ENCODE measurements at regions of chr7 and their contacts with region 1.

Region 1: DNA sequence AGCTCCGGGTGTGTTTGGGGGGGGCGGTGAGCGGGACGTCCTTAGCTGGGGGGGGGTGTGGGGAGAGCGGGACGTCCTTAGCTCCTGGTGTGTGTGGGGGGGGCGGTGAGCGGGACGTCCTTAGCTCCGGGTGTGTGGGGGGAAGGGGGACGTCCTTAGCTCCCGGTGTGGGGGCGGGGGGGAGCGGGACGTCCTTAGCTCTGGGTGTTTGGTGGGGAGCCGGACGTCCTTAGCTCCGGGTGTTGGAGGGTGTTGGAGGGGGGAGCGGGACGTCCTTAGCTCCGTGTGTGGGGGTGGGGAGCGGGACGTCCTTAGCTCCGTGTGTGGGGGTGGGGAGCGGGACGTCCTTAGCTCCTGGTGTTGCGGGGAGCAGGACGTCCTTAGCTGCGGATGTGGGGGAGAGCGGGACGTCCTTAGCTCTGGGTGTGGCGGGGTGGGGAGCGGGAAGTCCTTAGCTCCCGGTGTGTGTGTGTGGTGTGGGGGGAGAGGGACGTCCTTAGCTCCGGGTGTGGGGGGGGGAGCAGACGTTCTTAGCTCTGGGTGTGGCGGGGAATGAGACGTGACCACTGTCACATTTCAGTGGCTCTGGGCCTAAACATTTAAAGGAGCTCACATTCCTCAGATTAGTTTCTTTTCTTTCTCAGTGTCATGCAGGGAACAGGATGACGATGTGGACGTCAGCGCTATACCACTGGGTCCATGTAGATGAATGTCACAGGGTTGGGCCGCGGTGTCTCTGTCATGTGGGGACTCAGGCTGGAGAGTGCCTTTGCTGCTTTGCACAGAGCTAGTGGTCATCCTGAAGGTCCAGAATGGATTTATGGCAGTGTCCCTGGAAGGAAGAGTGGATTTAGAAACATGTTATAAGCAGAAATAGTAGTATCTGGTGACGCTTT is 7.5 kb downstream of the DYNC2I1 start:
- DNase-seq: peak; percentile 72 to 91
- H3K4me3 ChIP-seq: peak overlapping the region; percentile 64 to 65
- H3K27ac ChIP-seq: peak overlapping the region; percentile 91 to 93
- H3K4me1 ChIP-seq: peaks cover 0 to 32% (median 17%) of the 10 kb centered on the region in 4 donors
- H3K27me3 ChIP-seq: no peaks in the 10 kb centered on the region
- CTCF ChIP-seq: no peak

Region 2: DNA sequence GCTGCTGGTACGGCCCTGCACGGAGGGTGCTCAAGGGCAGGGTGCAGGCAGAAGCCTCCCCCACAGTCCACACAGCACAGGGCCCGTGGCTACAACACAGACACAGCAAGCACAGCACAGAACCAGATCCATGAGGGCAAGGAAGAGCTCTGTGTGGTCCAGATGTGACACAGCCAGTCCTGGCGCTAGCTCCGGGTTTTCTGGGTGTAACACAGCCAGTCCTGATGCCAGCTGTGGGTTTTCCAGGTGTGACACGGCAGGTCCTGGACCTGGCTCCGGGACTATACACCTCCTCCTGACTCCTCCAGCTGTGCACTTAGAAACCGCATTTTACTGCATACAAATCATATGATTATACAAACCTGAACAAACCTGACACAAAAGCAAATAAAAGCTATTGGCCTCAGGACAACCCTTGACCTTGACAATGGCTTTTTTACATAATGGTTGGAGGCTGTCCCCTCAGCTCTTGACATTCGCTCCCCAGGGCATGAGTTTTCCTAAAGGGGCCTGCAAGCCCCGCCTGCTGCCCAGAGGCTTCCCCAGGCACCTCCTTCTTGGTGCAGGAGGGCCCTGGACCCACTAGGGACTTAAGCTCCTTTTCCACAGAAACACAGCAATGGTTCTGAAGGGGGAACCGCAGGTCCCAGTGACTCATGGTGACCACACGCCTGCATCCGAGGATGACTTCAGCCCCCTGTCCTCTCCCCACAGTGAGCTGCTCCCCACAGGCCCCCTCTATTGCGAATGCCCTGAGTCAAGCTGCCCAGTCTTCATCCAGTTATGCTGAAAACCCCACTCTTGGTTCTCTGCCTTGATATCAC is 485.8 kb before region 1 on chr7:
- intact Hi-C with region 1: no loop called
- DNase-seq: no peak
- H3K4me3 ChIP-seq: no peak overlapping the region
- H3K27ac ChIP-seq: no peak overlapping the region
- H3K4me1 ChIP-seq: no peaks in the 10 kb centered on the region
- H3K27me3 ChIP-seq: peaks cover 0 to 27% of the 10 kb centered on the region in 2 donors
- CTCF ChIP-seq: no peak

Region 3: DNA sequence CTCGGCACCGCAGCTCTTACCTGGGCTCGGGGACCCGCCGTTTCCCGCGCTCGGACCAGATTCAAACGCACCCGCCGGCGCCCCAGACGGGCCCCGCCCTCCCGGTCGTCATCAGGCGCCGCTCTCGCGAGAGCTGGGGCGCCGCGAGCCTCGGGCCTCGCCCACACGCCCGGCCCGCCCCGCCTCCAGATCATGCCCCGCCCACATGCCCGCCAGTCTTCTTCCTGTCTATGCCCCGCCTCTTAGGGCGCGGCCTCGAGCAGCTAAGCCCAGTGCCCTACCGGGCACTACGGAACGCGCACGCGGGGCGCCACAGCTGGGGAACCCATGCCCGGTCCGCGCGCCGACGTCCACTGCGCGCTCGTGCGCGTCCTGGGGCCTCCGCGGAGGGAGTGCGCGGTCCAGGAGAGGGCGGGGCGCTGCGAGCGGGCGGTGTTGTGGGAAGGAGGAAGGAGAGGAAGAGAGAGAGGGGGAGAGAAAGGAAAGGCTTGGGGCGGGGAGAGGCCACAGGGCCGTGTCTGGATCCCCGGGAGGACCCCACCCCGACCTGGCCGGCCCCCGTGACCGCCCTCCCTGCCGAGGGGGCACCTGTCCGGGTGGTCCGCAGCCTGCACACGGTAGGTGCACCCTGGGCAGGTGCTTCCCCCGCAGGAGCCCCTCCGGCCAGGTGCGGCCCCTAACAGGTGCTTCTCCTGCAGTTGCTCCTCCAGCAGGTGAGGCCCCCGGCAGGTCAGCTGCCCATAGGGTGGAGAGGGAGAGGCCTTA is 159.0 kb before region 1 on chr7 and contains the start of gene NCAPG2:
- intact Hi-C with region 1: loop called (anchors 10 kb)
- DNase-seq: peak; percentile 97 to 99
- H3K4me3 ChIP-seq: peak within 1 kb of the TSS; percentile 62 to 93
- H3K27ac ChIP-seq: peak within 1 kb of the TSS; percentile 80 to 81
- H3K4me1 ChIP-seq: peaks cover 0 to 19% (median 16%) of the 10 kb centered on the region in 4 donors
- H3K27me3 ChIP-seq: no peaks in the 10 kb centered on the region
- CTCF ChIP-seq: peak; percentile 54 to 60